CD8-positive, alpha-beta T cell (primary cell): ENCODE measurements at regions of chr14 and their contacts with region 1.

Region 1: DNA sequence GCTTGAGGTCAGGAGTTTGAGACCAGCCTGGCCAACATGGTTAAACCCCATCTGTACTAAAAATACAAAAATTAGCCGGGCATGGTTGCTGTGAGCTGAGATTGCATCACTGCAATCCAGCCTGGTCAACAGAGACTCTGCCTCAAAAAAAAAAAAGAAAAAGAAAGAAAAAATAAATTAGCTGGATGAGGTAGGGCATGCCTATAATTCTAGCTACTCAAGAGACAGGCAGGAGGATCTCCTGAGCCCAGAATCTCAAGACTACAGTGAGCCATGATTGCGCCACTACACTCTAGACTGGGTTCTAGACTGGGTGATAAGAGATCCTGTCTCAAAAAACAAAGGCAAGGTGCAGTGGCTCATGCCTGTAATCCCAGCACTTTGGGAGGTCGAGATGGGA is 16.9 kb downstream of the PPP4R3A start:
- DNase-seq: no peak
- ATAC-seq: no peak
- H3K4me3 ChIP-seq: no peak overlapping the region
- H3K4me3 Mint-ChIP-seq: no peak overlapping the region
- H3K27ac ChIP-seq: no peak overlapping the region
- H3K27ac Mint-ChIP-seq: no peak overlapping the region
- H3K4me1 ChIP-seq: peaks cover 55% of the 10 kb centered on the region
- H3K4me1 Mint-ChIP-seq: peaks cover 71% of the 10 kb centered on the region
- H3K27me3 ChIP-seq: no peaks in the 10 kb centered on the region
- H3K27me3 Mint-ChIP-seq: no peaks in the 10 kb centered on the region
- CTCF ChIP-seq: no peak

Region 2: GRCh38 chr14:91482263-91483013 is 10.7 kb before region 1 on chr14:
- CTCF ChIA-PET with region 1: no interaction called
- POLR2A ChIA-PET with region 1: no interaction called
- intact Hi-C with region 1: loop called in 1 of 2 experiments (anchors 1 kb)
- DNase-seq: no peak
- ATAC-seq: no peak
- H3K4me3 ChIP-seq: no peak overlapping the region
- H3K4me3 Mint-ChIP-seq: no peak overlapping the region
- H3K27ac ChIP-seq: no peak overlapping the region
- H3K27ac Mint-ChIP-seq: peak overlapping the region; percentile 38
- H3K4me1 ChIP-seq: peaks cover 7% of the 10 kb centered on the region
- H3K4me1 Mint-ChIP-seq: peaks cover 78% of the 10 kb centered on the region
- H3K27me3 ChIP-seq: no peaks in the 10 kb centered on the region
- H3K27me3 Mint-ChIP-seq: no peaks in the 10 kb centered on the region
- CTCF ChIP-seq: no peak

Region 3: GRCh38 chr14:91872517-91873470 is 379.6 kb after region 1 on chr14:
- CTCF ChIA-PET with region 1: no interaction called
- POLR2A ChIA-PET with region 1: no interaction called
- intact Hi-C with region 1: no loop called
- DNase-seq: peak in 7 of 9 experiments; percentile 51 to 87 (median 77)
- ATAC-seq: peak; percentile 37
- H3K4me3 ChIP-seq: peak overlapping the region; percentile 31 to 47
- H3K4me3 Mint-ChIP-seq: peak overlapping the region; percentile 71
- H3K27ac ChIP-seq: peak overlapping the region; percentile 83 to 86
- H3K27ac Mint-ChIP-seq: peak overlapping the region; percentile 99
- H3K4me1 ChIP-seq: peaks cover 92% of the 10 kb centered on the region
- H3K4me1 Mint-ChIP-seq: peaks cover 99% of the 10 kb centered on the region
- H3K27me3 ChIP-seq: no peaks in the 10 kb centered on the region
- H3K27me3 Mint-ChIP-seq: no peaks in the 10 kb centered on the region
- CTCF ChIP-seq: no peak

Region 4: DNA sequence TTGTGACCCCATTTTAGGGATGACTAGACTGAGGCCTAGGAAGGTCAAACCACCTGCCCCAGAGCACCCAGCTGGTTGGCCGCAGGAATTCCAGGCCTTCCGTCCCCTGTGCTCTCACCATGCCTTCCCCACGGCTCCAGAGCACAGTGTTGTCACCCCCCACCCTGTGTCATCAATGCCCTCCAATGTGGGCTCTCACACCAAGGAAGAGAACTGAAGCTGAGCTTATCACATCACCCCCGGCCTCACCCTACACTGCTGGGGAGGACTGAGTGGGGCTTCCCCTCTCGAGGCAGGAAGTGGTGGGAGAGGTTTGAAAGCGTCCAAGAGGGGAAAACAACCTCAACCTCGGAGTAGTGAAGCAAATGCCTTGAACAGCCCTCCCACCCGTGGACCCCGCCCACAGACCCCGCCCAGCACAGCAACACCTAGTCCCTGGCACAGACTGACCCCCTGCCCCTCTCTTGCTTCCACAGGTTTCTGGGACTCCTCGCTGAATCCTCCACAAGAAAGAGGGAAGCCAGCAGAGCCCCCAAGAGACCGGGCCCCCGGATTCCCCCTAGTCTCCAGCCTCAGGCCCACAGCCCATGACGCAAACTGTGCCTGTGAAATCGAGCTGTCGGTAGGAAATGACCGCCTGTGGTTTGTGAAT is 1158.1 kb after region 1 on chr14:
- CTCF ChIA-PET with region 1: no interaction called
- POLR2A ChIA-PET with region 1: no interaction called
- intact Hi-C with region 1: no loop called
- DNase-seq: peak; percentile 56 to 96 (median 84)
- ATAC-seq: peak; percentile 82
- H3K4me3 ChIP-seq: peak overlapping the region; percentile 77 to 91
- H3K4me3 Mint-ChIP-seq: peak overlapping the region; percentile 98
- H3K27ac ChIP-seq: peak overlapping the region; percentile 77 to 95
- H3K27ac Mint-ChIP-seq: peak overlapping the region; percentile 100
- H3K4me1 ChIP-seq: peaks cover 61% of the 10 kb centered on the region
- H3K4me1 Mint-ChIP-seq: peaks cover 76% of the 10 kb centered on the region
- H3K27me3 ChIP-seq: no peaks in the 10 kb centered on the region
- H3K27me3 Mint-ChIP-seq: no peaks in the 10 kb centered on the region
- CTCF ChIP-seq: no peak